ENCODE measurements at regions of chr11 and their contacts with region 1.

Region 1: DNA sequence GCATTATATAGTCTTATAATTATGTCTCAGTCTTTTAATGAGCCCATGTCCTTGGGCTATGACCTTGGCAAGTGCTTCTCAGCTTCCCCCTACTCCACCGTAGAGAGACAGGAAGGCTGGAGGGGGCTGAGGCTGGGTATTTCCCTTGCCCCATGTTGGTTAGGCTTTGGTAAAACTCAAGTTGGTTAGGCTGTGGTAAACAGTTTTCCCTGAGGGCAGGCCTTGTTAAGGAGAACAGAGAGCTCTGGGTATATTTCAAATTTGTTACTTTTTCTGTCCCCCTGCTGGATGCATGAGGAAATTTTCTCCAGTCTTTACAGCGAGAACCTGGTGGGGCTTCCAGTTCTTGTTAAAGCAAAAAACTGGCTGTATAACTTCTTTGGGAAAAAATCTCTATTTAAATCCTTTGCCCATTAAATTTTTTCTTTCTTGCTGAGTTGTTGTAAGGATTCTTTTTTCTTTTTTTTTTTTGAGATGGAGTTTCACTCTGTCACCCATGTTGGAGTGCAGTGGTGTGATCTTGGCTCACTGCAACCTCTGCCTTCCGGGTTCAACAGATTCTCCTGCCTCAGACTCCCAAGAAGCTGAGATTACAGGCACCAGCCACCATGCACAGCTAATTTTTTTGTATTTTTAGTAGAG is 12.2 kb upstream of the DCHS1 start:
- DNase-seq: peak; percentile 70
- ATAC-seq: peak; percentile 79
- H3K4me3 ChIP-seq: no peak overlapping the region
- H3K4me3 Mint-ChIP-seq: no peak overlapping the region
- H3K27ac ChIP-seq: no peak overlapping the region
- H3K27ac Mint-ChIP-seq: peak overlapping the region; percentile 34
- H3K4me1 ChIP-seq: peaks cover 0 to 5% of the 10 kb centered on the region in 2 donors
- H3K4me1 Mint-ChIP-seq: peaks cover 5% of the 10 kb centered on the region
- H3K27me3 ChIP-seq: no peaks in the 10 kb centered on the region
- H3K27me3 Mint-ChIP-seq: peaks cover 6% of the 10 kb centered on the region
- CTCF ChIP-seq: peak; percentile 75

Region 2: GRCh38 chr11:6603287-6604080 is 64.4 kb before region 1 on chr11 and contains the starts of genes ILK and RRP8:
- CTCF ChIA-PET with region 1: interaction called, 52 read pairs
- POLR2A ChIA-PET with region 1: no interaction called
- intact Hi-C with region 1: loop called (anchors 1 kb)
- DNase-seq: peak; percentile 91
- ATAC-seq: peak; percentile 92
- H3K4me3 ChIP-seq: peak within 1 kb of the TSS; percentile 77 to 96 (median 93)
- H3K4me3 Mint-ChIP-seq: no peak within 1 kb of the TSS
- H3K27ac ChIP-seq: peak within 1 kb of the TSS; percentile 70 to 89
- H3K27ac Mint-ChIP-seq: no peak within 1 kb of the TSS
- H3K4me1 ChIP-seq: peaks cover 51 to 56% of the 10 kb centered on the region in 2 donors
- H3K4me1 Mint-ChIP-seq: peaks cover 42% of the 10 kb centered on the region
- H3K27me3 ChIP-seq: no peaks in the 10 kb centered on the region
- H3K27me3 Mint-ChIP-seq: no peaks in the 10 kb centered on the region
- CTCF ChIP-seq: peak; percentile 8
- total RNA-seq, gene ILK: 119 and 131 TPM in 2 replicates
- total RNA-seq, gene RRP8: 29.4 and 29.5 TPM in 2 replicates

Region 3: GRCh38 chr11:6619004-6619745 is 48.7 kb before region 1 on chr11 and contains the start of gene TPP1:
- CTCF ChIA-PET with region 1: interaction called, 38 read pairs
- POLR2A ChIA-PET with region 1: interaction called, 7 read pairs
- intact Hi-C with region 1: loop called (anchors 1 kb)
- DNase-seq: peak; percentile 97
- ATAC-seq: peak; percentile 92
- H3K4me3 ChIP-seq: peak within 1 kb of the TSS; percentile 82 to 100 (median 96)
- H3K4me3 Mint-ChIP-seq: no peak within 1 kb of the TSS
- H3K27ac ChIP-seq: peak within 1 kb of the TSS; percentile 94 to 97
- H3K27ac Mint-ChIP-seq: no peak within 1 kb of the TSS
- H3K4me1 ChIP-seq: peaks cover 19 to 33% of the 10 kb centered on the region in 2 donors
- H3K4me1 Mint-ChIP-seq: peaks cover 11% of the 10 kb centered on the region
- H3K27me3 ChIP-seq: no peaks in the 10 kb centered on the region
- H3K27me3 Mint-ChIP-seq: no peaks in the 10 kb centered on the region
- CTCF ChIP-seq: no peak
- total RNA-seq, gene TPP1: 191 and 200 TPM in 2 replicates

Region 4: DNA sequence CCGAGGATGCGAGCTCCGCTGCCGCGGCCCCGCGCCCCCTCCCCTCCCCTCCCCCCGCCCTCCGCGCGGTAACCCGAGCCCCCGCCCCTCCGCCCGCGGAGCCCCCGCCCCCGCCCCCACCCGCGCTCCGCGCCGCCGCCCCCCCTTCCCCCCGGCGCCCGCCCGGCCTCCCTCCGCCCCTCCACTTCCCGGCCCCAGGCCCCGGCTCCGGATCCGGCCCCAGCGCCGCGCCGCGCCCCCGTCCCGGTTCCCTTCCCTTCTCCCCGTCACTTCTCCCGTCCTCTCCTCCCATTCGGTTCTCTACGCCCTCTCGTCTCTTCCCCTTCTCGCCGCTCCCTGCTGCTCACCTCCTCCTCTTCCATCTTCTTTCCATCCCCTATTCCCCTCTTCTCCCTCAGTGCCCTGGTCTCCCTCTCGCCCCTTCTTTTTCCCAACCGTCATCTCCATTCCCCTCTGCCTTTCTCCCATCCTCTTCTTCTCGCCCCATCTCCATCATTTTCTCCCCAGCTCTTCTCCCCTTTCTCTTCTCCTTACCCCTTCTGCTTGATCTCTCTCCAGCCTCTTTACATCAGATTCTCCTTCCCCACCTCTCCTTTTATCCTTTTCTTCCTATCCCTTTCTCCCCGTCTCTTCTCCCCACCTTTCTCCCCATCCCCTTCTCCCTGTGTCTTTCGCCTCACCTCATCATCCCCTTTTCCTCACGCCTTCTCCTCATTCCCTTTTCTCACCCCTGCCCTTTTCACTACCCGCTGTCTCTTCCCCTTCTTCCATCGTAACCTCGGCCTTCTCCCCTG is 11.9 kb before region 1 on chr11 and contains the start of gene DCHS1:
- CTCF ChIA-PET with region 1: interaction called, 14 read pairs
- POLR2A ChIA-PET with region 1: interaction called, 8 read pairs
- intact Hi-C with region 1: no loop called
- DNase-seq: peak; percentile 38
- ATAC-seq: peak; percentile 29
- H3K4me3 ChIP-seq: peak within 1 kb of the TSS in 4 of 5 experiments; percentile 24 to 57 (median 38)
- H3K4me3 Mint-ChIP-seq: peak within 1 kb of the TSS; percentile 72
- H3K27ac ChIP-seq: no peak within 1 kb of the TSS
- H3K27ac Mint-ChIP-seq: peak within 1 kb of the TSS; percentile 72
- H3K4me1 ChIP-seq: peaks cover 10 to 12% of the 10 kb centered on the region in 2 donors
- H3K4me1 Mint-ChIP-seq: peaks cover 9% of the 10 kb centered on the region
- H3K27me3 ChIP-seq: peaks cover 0 to 19% (median 12%) of the 10 kb centered on the region in 4 experiments
- H3K27me3 Mint-ChIP-seq: peaks cover 13% of the 10 kb centered on the region
- CTCF ChIP-seq: no peak
- total RNA-seq, gene DCHS1: 0.78 and 0.84 TPM in 2 replicates